Activated CD4-positive, alpha-beta T cell treated with anti-CD3 and anti-CD28 coated beads, Interleukin-2, amount 10 ng/mL, durations not matched to agents 24 days and 14 days (primary cell): ENCODE measurements at regions of chr15 and their contacts with region 1.

Region 1: GRCh38 chr15:84734794-84735479 is 13.5 kb upstream of the ZNF592 start:
- DNase-seq: peak; percentile 92
- H3K4me3 Mint-ChIP-seq: peak overlapping the region; percentile 79
- H3K27ac Mint-ChIP-seq: peak overlapping the region; percentile 96
- H3K4me1 Mint-ChIP-seq: peaks cover 46% of the 10 kb centered on the region
- H3K27me3 Mint-ChIP-seq: no peaks in the 10 kb centered on the region

Region 2: GRCh38 chr15:84669726-84670125 is 65.2 kb before region 1 on chr15:
- intact Hi-C with region 1: loop called (anchors 1 kb)
- DNase-seq: no peak
- H3K4me3 Mint-ChIP-seq: no peak overlapping the region
- H3K27ac Mint-ChIP-seq: peak overlapping the region; percentile 90
- H3K4me1 Mint-ChIP-seq: peaks cover 32% of the 10 kb centered on the region
- H3K27me3 Mint-ChIP-seq: no peaks in the 10 kb centered on the region

Region 3: DNA sequence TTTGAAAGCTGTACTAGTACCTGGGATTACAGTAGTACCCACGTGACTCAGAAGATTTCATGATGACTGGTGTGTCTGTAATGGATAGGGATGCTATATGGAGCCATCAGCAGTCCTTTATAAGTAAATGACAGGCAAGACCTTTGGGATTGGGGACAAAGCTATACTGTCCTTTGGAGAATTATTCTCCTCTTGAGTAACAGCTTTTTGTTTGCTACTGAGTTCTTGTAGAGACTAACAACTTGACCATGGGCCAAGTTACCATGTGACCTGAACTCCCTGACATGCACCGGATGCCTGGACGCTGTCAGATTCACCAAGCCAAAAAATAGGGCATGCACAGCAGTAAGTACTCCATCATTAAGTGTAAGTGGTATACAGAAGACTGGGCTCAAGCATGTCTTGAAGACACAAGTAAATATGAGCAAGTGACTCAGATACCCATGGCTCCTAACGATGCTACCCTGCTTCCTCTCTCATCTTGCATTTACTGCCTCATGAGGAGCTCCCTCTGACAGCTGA is 31.9 kb before region 1 on chr15:
- intact Hi-C with region 1: loop called (anchors 5 kb)
- DNase-seq: no peak
- H3K4me3 Mint-ChIP-seq: no peak overlapping the region
- H3K27ac Mint-ChIP-seq: peak overlapping the region; percentile 43
- H3K4me1 Mint-ChIP-seq: peaks cover 49% of the 10 kb centered on the region
- H3K27me3 Mint-ChIP-seq: no peaks in the 10 kb centered on the region

Region 4: GRCh38 chr15:84722628-84723027 is 12.3 kb before region 1 on chr15:
- intact Hi-C with region 1: no loop called
- DNase-seq: no peak
- H3K4me3 Mint-ChIP-seq: no peak overlapping the region
- H3K27ac Mint-ChIP-seq: no peak overlapping the region
- H3K4me1 Mint-ChIP-seq: peaks cover 24% of the 10 kb centered on the region
- H3K27me3 Mint-ChIP-seq: no peaks in the 10 kb centered on the region

Region 5: GRCh38 chr15:84748274-84749110 is 13.6 kb after region 1 on chr15 and contains the start of gene ZNF592:
- intact Hi-C with region 1: loop called (anchors 1 kb)
- DNase-seq: peak; percentile 94
- H3K4me3 Mint-ChIP-seq: peak within 1 kb of the TSS; percentile 97
- H3K27ac Mint-ChIP-seq: peak within 1 kb of the TSS; percentile 94
- H3K4me1 Mint-ChIP-seq: peaks cover 50% of the 10 kb centered on the region
- H3K27me3 Mint-ChIP-seq: no peaks in the 10 kb centered on the region
- total RNA-seq, gene ZNF592: 30.0 and 30.6 TPM in 2 replicates

Region 6: GRCh38 chr15:84761607-84762131 is 26.7 kb after region 1 on chr15:
- intact Hi-C with region 1: loop called (anchors 1 kb)
- DNase-seq: peak; percentile 66
- H3K4me3 Mint-ChIP-seq: no peak overlapping the region
- H3K27ac Mint-ChIP-seq: no peak overlapping the region
- H3K4me1 Mint-ChIP-seq: peaks cover 21% of the 10 kb centered on the region
- H3K27me3 Mint-ChIP-seq: no peaks in the 10 kb centered on the region

Region 7: GRCh38 chr15:85116925-85117680 is 382.2 kb after region 1 on chr15:
- intact Hi-C with region 1: no loop called
- DNase-seq: no peak
- H3K4me3 Mint-ChIP-seq: no peak overlapping the region
- H3K27ac Mint-ChIP-seq: peak overlapping the region; percentile 64
- H3K4me1 Mint-ChIP-seq: peaks cover 21% of the 10 kb centered on the region
- H3K27me3 Mint-ChIP-seq: no peaks in the 10 kb centered on the region